ENCODE measurements at regions of chr12 and their contacts with region 1.

Region 1: GRCh38 chr12:31536672-31537071 is 54.3 kb downstream of the DENND5B start:
- DNase-seq: no peak

Region 2: GRCh38 chr12:31482816-31483215 is 53.9 kb before region 1 on chr12:
- intact Hi-C with region 1: no loop called
- DNase-seq: no peak

Region 3: GRCh38 chr12:31560516-31560915 is 23.8 kb after region 1 on chr12:
- intact Hi-C with region 1: loop called (anchors 2 kb)
- DNase-seq: no peak